Common myeloid progenitor, CD34-positive (primary cell): ENCODE measurements at regions of chr5 and their contacts with region 1.

Region 1: GRCh38 chr5:132007399-132008165 is 3.9 kb downstream of the ACSL6 start:
- DNase-seq: peak; percentile 84 to 90 (median 85)
- H3K4me3 ChIP-seq: no peak overlapping the region
- H3K27ac ChIP-seq: no peak overlapping the region
- H3K4me1 ChIP-seq: peaks cover 0 to 24% (median 20%) of the 10 kb centered on the region in 4 experiments
- H3K27me3 ChIP-seq: peaks cover 0 to 37% (median 18%) of the 10 kb centered on the region in 5 experiments

Region 2: GRCh38 chr5:131589510-131590348 is 417.9 kb before region 1 on chr5:
- CTCF ChIA-PET with region 1: interaction called, 126 read pairs
- POLR2A ChIA-PET with region 1: no interaction called
- DNase-seq: peak; percentile 72 to 86 (median 84)
- H3K4me3 ChIP-seq: no peak overlapping the region
- H3K27ac ChIP-seq: no peak overlapping the region
- H3K4me1 ChIP-seq: peaks cover 4 to 23% (median 15%) of the 10 kb centered on the region in 4 experiments
- H3K27me3 ChIP-seq: no peaks in the 10 kb centered on the region

Region 3: DNA sequence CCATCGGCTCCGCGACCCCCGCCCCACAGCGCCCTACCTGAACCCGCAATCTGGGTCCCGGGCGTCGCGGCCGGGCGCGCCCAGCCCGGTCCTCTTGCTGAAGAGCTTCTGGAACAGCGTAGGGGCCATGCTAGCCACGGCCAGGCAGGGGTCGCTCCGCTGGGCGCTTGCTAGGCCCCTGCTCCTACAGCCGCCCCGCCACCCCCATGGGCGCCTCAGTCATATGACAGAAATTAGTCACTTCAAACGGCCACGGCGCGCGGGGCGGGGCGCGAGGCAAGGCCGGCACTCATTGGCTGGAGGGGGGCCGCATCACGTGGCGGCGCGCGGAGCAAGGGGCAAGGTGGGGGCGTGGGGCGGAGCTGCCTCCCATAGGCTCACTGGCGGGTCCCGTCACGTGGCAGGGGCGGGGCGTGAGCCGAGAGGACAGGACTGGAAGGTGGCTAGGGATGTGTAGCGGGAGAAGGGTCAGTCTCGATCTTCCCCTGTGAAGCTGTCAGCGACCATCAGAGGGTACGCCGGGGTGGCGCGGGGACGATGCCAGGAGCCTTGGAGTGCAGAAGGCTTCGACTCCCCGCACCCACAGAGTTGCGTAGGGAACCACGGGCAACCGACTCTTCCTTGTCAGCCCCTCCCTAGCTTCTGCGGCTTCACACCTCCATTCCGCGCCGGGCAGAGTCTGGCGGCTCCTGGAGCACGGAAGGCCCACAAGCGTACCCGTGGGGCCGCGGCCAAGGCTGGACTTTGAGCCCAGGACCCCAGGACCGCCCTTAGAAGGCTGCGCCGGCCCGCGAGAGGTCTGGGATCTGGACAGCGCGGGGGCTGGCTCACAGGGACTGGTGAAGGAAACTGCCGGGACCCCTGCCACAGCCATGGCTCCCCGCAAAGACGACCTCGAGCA is 210.5 kb before region 1 on chr5 and contains the start of gene FNIP1:
- CTCF ChIA-PET with region 1: interaction called, 16 read pairs
- POLR2A ChIA-PET with region 1: interaction called, 3 read pairs
- DNase-seq: peak; percentile 98 to 99 (median 98)
- H3K4me3 ChIP-seq: peak within 1 kb of the TSS; percentile 86 to 100 (median 96)
- H3K27ac ChIP-seq: peak within 1 kb of the TSS; percentile 98 to 99
- H3K4me1 ChIP-seq: peaks cover 17 to 36% (median 27%) of the 10 kb centered on the region in 4 experiments
- H3K27me3 ChIP-seq: no peaks in the 10 kb centered on the region

Region 4: DNA sequence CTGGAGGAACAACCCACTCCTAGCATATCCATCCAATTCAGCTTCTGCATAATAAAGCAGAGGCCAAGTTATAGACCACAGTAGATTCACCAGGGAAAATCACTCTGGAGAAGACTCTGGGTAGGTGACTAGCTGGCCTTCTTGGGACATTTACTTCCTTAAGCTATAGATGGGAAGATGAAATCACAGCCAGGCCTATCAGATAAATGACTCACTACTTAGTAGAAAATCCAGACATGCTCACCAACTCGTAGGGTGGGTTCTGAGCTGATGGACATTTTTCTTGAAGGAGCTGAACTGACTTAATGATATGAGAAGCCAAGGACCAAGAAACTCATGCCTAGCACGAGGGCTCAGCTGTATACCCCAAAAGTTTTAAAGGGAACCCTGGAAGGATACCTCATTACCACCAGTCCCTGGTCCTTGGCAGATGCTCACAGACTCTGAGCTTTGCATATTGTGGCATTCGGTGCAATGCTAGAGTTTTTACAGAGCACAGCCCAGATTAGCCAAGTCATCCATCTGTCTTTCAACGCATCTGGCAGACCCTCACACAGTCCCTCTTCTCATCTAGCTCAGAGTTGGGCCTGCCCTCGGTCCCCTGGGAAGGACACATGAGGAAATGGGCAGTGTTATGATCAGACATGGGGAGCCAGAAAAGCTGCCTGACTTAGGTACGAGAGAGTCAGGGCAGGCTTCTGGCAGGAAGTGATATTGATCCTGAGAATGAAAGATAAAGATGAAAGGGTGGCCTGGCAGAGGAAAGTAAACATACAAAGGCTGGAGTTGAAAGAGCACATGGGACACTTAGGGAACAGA is 11.2 kb before region 1 on chr5:
- CTCF ChIA-PET with region 1: interaction called, 25 read pairs
- POLR2A ChIA-PET with region 1: no interaction called
- DNase-seq: peak; percentile 81 to 93 (median 91)
- H3K4me3 ChIP-seq: no peak overlapping the region
- H3K27ac ChIP-seq: no peak overlapping the region
- H3K4me1 ChIP-seq: peaks cover 7 to 56% (median 46%) of the 10 kb centered on the region in 4 experiments
- H3K27me3 ChIP-seq: peaks cover 0 to 3% (median 0%) of the 10 kb centered on the region in 5 experiments

Region 5: DNA sequence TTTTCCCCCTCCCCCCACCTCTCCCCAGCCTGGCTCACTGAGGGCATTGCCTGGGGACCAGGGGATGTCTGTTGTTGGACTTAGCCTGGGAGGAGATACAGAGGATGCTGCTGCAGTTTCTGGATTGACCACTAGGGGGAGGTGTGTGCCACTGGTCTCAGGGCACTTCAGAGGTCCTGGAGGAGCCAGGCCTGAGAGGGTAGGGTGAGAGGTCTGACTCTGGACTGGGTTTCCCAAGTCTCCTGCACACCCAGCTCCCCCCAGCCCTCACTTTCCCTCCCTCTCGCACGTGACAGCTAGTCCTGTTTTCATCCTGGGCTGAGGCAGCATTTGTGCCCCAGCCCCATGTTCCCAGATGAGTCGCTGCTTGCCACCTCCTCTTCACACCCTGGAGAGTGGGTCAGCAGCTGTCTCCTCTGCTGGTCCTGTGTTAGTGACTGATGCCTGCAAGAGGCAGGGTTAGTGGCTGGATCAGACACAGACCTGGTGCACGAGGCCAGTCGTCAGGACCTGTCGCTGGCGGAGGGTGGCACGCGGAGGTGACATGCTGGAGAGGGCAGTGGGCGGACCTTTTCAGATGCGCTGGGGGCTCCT is 57.3 kb after region 1 on chr5:
- CTCF ChIA-PET with region 1: interaction called, 11 read pairs
- POLR2A ChIA-PET with region 1: no interaction called
- DNase-seq: peak; percentile 70 to 81 (median 73)
- H3K4me3 ChIP-seq: no peak overlapping the region
- H3K27ac ChIP-seq: no peak overlapping the region
- H3K4me1 ChIP-seq: peaks cover 0 to 11% (median 2%) of the 10 kb centered on the region in 4 experiments
- H3K27me3 ChIP-seq: peaks cover 0 to 3% (median 0%) of the 10 kb centered on the region in 5 experiments

Region 6: DNA sequence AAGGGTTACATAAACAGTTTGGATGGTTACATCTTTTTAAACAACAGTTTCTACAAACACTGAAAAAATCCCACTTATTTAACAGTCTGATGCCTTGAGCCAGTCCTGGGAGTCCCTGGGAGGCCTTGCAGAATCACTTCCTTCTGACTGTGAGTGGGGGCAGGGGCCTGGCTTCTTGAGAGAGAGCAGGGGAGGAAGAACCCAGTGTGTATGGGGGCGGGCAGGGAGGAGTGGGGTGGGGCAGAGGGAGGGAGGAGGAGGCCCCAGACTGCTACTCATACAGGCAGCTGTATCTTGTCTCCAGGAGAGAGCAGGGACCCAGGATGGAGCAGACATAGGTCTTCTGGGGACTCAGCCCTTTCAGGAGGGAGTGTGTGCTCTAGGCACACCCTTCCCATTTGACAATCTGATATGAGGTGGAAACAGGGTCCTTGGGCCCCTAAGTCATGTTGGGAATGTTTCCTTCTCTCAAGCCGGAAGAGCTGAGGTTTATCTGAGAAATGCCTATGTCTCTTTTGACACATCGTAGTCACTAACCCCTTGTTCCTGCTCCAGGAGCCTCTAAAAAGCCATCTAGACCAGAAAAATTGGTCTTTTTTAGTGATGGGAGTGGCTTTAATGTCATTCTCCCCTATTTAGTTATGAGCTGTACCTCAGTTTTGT is 430.2 kb after region 1 on chr5:
- CTCF ChIA-PET with region 1: no interaction called
- POLR2A ChIA-PET with region 1: no interaction called
- DNase-seq: peak in 2 of 3 donors; percentile 62 to 72
- H3K4me3 ChIP-seq: peak overlapping the region in 1 of 7 experiments; percentile 10
- H3K27ac ChIP-seq: peak overlapping the region; percentile 37 to 75
- H3K4me1 ChIP-seq: peaks cover 16 to 74% (median 62%) of the 10 kb centered on the region in 4 experiments
- H3K27me3 ChIP-seq: no peaks in the 10 kb centered on the region